ENCODE measurements at regions of chr6 and their contacts with region 1.

Region 1: GRCh38 chr6:16514249-16514648 is 247.0 kb downstream of the ATXN1 start:
- DNase-seq: no peak
- H3K4me3 ChIP-seq: no peak overlapping the region
- H3K27ac ChIP-seq: peak overlapping the region in 1 of 4 donors; percentile 10
- H3K4me1 ChIP-seq: peaks cover 5 to 47% (median 7%) of the 10 kb centered on the region in 3 donors
- H3K27me3 ChIP-seq: no peaks in the 10 kb centered on the region
- CTCF ChIP-seq: peak in 5 of 6 experiments; percentile 34 to 53 (median 41)
- POLR2A ChIP-seq: no peak

Region 2: DNA sequence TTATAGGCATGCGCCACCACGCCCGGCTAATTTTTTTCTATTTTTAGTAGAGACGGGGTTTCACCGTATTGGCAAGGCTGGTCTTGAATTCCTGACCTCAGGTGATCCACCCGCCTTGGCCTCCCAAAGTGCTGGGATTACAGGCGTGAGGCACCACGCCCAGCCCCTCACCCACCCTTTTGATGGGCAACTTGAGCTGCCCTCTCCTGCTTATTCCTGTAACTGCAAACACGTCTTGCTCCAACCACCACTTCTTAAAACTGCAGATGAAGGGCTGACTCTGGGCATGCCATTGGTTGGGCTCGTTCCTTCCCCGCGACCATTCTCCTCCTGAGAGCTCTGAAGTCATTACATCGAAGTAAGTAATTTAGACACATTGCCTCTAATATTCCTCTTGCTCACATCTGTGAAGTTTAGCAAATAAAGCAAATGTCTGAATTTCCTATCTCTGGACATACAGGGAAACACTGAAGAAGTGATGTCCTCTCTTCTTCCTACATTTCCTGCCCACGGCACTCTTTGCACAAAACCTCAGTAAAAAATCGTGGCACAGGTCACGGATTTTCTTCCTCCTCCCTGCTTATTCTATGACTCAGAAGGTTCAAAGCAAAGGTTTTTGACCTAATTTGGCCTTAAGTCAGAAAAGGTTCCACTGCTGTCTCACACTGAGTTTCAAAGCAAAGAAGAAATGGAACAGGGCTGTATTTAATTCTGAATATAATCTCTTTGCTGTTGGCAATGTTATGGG is 158.4 kb before region 1 on chr6:
- intact Hi-C with region 1: no loop called
- DNase-seq: no peak
- H3K4me3 ChIP-seq: no peak overlapping the region
- H3K27ac ChIP-seq: peak overlapping the region; percentile 19 to 70 (median 52)
- H3K4me1 ChIP-seq: peaks cover 0 to 60% (median 10%) of the 10 kb centered on the region in 3 donors
- H3K27me3 ChIP-seq: no peaks in the 10 kb centered on the region
- CTCF ChIP-seq: peak in 2 of 6 experiments; percentile 11 to 20
- POLR2A ChIP-seq: no peak

Region 3: DNA sequence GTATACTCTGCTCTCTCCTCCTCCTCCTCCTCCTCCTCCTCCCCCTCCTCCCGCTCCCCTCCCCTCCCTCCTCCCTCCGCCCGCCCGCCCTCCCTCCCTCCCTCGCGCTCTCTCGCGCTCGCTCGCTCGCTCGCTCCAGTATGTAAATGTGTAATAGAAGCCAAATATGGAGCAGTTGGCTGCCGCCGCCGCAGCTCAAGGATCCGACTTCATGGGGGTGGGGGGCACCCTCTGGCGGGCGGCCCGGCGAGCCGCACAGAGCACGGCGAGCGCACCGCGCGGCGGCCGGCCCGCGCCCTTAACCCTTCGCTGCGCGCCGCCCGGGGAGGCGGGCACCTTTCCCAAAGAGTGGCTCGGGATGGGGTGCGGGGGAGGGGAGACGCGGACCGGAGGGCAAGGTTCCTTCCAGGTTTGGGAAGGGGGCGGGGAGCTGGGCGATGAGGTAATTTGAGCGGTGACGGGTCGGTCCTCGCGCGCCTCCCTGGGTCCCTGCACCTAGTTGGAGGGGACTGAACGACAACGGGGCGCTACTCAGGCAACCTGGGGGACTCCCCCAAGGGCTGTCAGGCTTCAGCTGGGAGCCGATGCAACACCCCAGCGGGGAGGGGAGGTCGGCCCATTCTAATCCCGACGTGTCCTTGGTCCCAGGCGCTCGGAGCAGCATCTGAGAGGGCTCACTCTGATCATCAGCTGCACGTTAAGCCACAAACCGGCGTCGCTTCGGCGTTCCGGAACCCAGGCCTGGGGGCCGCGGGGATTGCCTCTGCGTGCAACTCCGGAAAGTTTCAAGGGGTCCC is 247.4 kb after region 1 on chr6:
- intact Hi-C with region 1: loop called (anchors 10 kb)
- DNase-seq: peak; percentile 65
- H3K4me3 ChIP-seq: peak overlapping the region; percentile 79 to 100 (median 98)
- H3K27ac ChIP-seq: peak overlapping the region; percentile 97 to 100 (median 99)
- H3K4me1 ChIP-seq: peaks cover 4 to 66% (median 18%) of the 10 kb centered on the region in 3 donors
- H3K27me3 ChIP-seq: no peaks in the 10 kb centered on the region
- CTCF ChIP-seq: peak in 5 of 6 experiments; percentile 7 to 45 (median 33)
- POLR2A ChIP-seq: peak in 2 of 4 donors; percentile 19 to 67

Region 4: DNA sequence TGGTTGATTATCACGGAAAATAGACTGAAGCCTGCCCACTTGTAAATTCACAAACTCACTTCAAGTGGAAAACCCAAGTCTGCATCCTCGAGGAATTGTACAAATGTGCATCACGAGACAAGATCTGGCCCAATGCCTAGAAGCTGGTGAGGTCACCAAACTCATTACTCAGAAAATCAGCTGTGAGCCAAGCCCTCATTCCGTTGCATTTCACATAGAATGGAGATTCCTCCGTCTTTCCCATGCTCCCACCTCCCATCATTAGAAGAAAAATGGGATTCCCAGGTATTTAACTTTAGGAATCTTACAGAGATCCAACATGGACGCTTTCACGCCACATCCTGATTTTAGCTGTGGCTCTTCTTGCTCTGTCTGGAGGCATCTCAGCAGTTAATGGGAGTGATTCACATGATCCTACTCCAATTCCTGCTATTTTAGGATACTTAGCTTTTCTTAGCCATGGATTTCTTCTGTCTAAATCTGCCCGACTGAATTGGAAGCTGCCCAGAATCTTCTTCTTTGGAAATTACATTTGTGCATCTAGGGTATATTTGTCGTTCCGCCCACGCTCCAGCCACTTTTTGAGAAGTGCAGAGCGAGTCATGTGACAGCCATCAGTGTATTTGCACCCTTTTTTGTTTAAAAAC is 518.9 kb after region 1 on chr6:
- intact Hi-C with region 1: no loop called
- DNase-seq: no peak
- H3K4me3 ChIP-seq: peak overlapping the region in 2 of 4 donors; percentile 13 to 46
- H3K27ac ChIP-seq: peak overlapping the region in 3 of 4 donors; percentile 73 to 79 (median 79)
- H3K4me1 ChIP-seq: peaks cover 0 to 22% (median 8%) of the 10 kb centered on the region in 3 donors
- H3K27me3 ChIP-seq: peaks cover 0 to 3% (median 0%) of the 10 kb centered on the region in 4 donors
- CTCF ChIP-seq: no peak
- POLR2A ChIP-seq: no peak